Naive thymus-derived CD8-positive, alpha-beta T cell (primary cell): ENCODE measurements at regions of chr5 and their contacts with region 1.

Region 1: DNA sequence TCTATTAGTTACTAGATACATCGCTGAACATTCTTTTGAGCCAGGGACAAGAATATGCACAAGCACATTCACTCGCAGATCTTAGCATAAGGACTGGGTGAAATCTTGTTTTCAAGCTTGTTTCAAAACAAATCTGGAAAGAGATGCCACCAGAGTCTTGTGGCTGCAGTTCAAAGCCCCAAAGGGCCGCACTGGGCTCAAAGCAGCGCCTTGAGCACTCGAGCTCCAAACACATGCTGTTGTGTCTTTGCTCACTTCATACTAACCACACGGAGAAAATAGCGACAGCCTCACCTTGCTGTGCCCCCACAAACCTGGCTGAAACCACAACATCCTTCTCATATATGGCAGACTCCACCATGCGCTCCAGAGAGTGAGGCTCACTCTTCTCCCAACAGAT is 34.2 kb upstream of the IL7R start:
- DNase-seq: peak; percentile 12 to 86 (median 68)
- ATAC-seq: peak; percentile 82 to 87
- H3K4me3 Mint-ChIP-seq: peak overlapping the region; percentile 54 to 79 (median 70)
- H3K27ac Mint-ChIP-seq: peak overlapping the region in 9 of 10 donors; percentile 82 to 97 (median 96)
- H3K4me1 Mint-ChIP-seq: peaks cover 55 to 90% (median 88%) of the 10 kb centered on the region in 4 donors
- H3K27me3 Mint-ChIP-seq: no peaks in the 10 kb centered on the region

Region 2: GRCh38 chr5:35717718-35718117 is 104.8 kb before region 1 on chr5:
- POLR2A ChIA-PET with region 1: no interaction called
- DNase-seq: no peak
- ATAC-seq: no peak
- H3K4me3 Mint-ChIP-seq: no peak overlapping the region
- H3K27ac Mint-ChIP-seq: peak overlapping the region in 2 of 10 donors; percentile 50 to 84
- H3K4me1 Mint-ChIP-seq: peaks cover 0 to 11% (median 4%) of the 10 kb centered on the region in 4 donors
- H3K27me3 Mint-ChIP-seq: no peaks in the 10 kb centered on the region

Region 3: DNA sequence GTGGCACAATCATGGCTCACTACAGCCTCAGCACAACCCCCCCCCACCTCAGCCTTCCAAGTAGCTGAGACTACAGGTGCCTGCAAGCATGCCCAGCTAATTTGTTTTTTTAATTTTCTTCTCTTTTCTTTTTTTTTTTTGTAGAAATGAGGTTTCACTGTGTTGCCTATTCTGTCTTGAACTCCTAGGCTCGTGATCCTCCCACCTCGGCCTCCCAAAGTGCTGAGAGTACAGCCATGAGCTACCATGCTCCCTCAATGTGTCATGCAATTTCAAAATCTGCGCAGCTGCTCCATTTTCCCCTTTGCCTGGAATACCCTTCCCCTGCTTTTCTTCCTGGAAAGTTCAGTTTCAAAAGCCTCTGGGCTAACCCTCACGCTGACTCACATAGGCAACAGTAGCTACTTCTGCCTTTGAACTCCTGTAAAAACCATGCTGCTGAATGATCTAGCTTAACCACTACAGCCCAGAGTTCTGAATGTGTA is 36.9 kb before region 1 on chr5:
- POLR2A ChIA-PET with region 1: interaction called, 99 read pairs
- DNase-seq: peak in 1 of 10 donors; percentile 26
- ATAC-seq: peak; percentile 60 to 83
- H3K4me3 Mint-ChIP-seq: peak overlapping the region in 9 of 10 donors; percentile 4 to 66 (median 52)
- H3K27ac Mint-ChIP-seq: peak overlapping the region; percentile 18 to 92 (median 82)
- H3K4me1 Mint-ChIP-seq: peaks cover 36 to 78% (median 71%) of the 10 kb centered on the region in 4 donors
- H3K27me3 Mint-ChIP-seq: no peaks in the 10 kb centered on the region

Region 4: DNA sequence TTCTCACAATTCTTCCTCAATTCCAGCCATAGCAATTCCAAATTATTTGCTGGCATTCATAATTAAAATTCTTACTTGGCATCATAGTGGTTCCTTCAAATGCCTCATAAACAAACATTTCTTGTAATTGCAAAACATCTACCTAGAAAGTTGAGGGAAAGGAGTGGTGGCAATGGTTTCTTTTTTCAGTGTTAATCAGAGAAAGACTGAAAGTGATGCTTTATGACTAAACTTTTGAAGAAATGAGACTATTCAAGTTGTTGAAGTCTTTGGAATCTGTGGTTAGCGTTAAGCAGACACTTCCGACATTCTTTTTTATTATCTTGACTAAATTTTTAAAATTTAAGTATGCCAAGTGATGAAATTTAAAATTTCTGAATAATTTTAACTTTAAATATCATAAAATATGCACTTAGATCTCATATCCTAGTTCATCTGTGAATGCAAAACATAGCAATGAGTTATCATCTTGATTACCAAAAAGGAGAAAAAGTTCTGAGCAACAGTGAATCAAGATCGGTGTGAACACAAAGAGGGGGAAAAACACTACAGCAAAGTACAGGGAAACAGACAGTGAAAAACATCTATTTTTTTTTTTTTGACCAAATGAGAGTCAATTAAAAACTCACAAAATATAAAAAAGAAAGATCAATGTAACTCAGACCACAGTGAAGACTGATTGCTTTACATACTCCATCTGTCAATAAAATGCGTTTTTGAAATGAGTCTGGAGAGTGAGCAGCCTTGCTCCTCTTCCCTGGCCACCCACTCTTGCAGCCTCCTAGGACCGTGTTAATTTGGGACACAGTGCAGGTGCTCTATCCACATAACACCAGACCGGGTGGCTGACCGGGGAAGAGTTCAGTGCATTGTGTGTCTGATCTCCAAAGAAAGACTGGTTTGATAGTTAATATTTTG is 13.5 kb after region 1 on chr5:
- POLR2A ChIA-PET with region 1: interaction called, 35 read pairs
- DNase-seq: no peak
- ATAC-seq: peak; percentile 35 to 48
- H3K4me3 Mint-ChIP-seq: peak overlapping the region in 9 of 10 donors; percentile 17 to 72 (median 64)
- H3K27ac Mint-ChIP-seq: peak overlapping the region in 9 of 10 donors; percentile 23 to 94 (median 86)
- H3K4me1 Mint-ChIP-seq: peaks cover 42 to 92% (median 86%) of the 10 kb centered on the region in 4 donors
- H3K27me3 Mint-ChIP-seq: no peaks in the 10 kb centered on the region

Region 5: GRCh38 chr5:35876921-35877320 is 54.4 kb after region 1 on chr5:
- POLR2A ChIA-PET with region 1: interaction called, 31 read pairs
- DNase-seq: no peak
- ATAC-seq: no peak
- H3K4me3 Mint-ChIP-seq: peak overlapping the region in 8 of 10 donors; percentile 15 to 78 (median 42)
- H3K27ac Mint-ChIP-seq: peak overlapping the region; percentile 82 to 97 (median 86)
- H3K4me1 Mint-ChIP-seq: peaks cover 44 to 92% (median 88%) of the 10 kb centered on the region in 4 donors
- H3K27me3 Mint-ChIP-seq: no peaks in the 10 kb centered on the region